ENCODE measurements at regions of chrX and their contacts with region 1.

Region 1: DNA sequence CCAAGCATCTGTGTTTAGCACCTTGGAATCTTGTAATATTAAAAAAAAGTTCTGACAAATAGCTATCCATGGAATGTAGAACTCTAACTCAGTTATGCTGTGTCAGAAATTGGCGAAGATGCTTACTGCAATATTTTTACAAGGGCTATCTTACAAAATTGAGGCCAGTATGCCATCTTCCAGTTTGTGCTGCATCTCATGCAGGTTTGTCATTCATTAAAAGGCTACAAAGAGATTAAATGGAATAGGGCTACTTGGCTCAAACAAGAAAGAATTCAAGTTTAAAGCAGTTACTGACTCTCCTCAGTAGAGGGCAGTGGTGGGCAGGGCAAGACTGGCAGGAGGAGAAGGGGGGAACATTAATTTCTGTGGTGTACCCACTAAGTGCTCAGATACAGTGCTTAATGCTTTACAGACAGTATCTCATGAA is 66.5 kb downstream of the SHROOM4 start:
- DNase-seq: no peak
- H3K4me3 ChIP-seq: no peak overlapping the region
- H3K27ac ChIP-seq: no peak overlapping the region
- H3K4me1 ChIP-seq: no peaks in the 10 kb centered on the region
- H3K27me3 ChIP-seq: no peaks in the 10 kb centered on the region
- CTCF ChIP-seq: peak; percentile 67

Region 2: GRCh38 chrX:50691820-50692219 is 55.7 kb before region 1 on chrX:
- CTCF ChIA-PET with region 1: no interaction called
- POLR2A ChIA-PET with region 1: no interaction called
- intact Hi-C with region 1: loop called (anchors 2 kb)
- DNase-seq: no peak
- H3K4me3 ChIP-seq: no peak overlapping the region
- H3K27ac ChIP-seq: no peak overlapping the region
- H3K4me1 ChIP-seq: no peaks in the 10 kb centered on the region
- H3K27me3 ChIP-seq: no peaks in the 10 kb centered on the region
- CTCF ChIP-seq: peak; percentile 51

Region 3: DNA sequence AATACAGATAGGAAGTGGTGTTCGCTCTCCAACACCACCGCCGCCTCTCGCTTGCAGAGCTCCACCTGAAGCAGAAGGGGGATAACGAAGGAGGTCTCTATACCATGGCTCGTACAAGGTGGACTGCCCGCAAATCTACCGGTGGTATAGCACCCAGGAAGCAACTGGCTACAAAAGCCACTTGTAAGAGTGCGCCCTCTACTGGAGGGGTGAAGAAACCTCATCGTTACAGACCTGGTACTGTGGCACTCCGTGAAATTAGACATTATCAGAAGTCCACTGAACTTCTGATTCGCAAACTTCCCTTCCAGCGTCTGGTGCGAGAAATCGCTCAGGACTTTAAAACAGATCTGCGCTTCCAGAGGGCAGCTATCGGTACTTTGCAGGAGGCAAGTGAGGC is 157.8 kb after region 1 on chrX:
- CTCF ChIA-PET with region 1: interaction called, 3 read pairs
- POLR2A ChIA-PET with region 1: no interaction called
- intact Hi-C with region 1: loop called (anchors 1 kb)
- DNase-seq: peak in 1 of 2 experiments; percentile 4
- H3K4me3 ChIP-seq: no peak overlapping the region
- H3K27ac ChIP-seq: no peak overlapping the region
- H3K4me1 ChIP-seq: no peaks in the 10 kb centered on the region
- H3K27me3 ChIP-seq: no peaks in the 10 kb centered on the region
- CTCF ChIP-seq: peak; percentile 52

Region 4: DNA sequence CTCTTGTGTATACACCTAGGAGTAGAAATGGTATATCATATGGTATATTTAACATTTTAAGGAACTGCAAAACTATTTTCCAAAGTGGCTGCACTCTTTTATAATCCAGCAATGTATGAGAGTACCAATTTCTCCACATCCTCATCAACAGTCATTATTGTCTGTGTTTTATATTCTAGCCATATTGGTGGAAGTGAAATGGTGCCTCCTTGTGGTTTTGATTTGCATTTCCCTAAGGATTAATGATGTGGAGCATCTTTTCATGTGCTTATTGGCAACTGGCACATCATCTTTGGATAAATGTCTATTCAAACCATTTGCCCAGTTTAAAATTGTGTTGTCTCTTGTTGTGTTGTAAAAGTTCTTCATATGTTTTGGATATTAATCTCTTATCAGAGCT is 172.6 kb after region 1 on chrX:
- CTCF ChIA-PET with region 1: no interaction called
- POLR2A ChIA-PET with region 1: no interaction called
- intact Hi-C with region 1: loop called (anchors 5 kb)
- DNase-seq: no peak
- H3K4me3 ChIP-seq: no peak overlapping the region
- H3K27ac ChIP-seq: no peak overlapping the region
- H3K4me1 ChIP-seq: no peaks in the 10 kb centered on the region
- H3K27me3 ChIP-seq: no peaks in the 10 kb centered on the region
- CTCF ChIP-seq: peak; percentile 52

Measured in PC-9 (cell line).